ENCODE measurements at regions of chr1 and their contacts with region 1.

Region 1: DNA sequence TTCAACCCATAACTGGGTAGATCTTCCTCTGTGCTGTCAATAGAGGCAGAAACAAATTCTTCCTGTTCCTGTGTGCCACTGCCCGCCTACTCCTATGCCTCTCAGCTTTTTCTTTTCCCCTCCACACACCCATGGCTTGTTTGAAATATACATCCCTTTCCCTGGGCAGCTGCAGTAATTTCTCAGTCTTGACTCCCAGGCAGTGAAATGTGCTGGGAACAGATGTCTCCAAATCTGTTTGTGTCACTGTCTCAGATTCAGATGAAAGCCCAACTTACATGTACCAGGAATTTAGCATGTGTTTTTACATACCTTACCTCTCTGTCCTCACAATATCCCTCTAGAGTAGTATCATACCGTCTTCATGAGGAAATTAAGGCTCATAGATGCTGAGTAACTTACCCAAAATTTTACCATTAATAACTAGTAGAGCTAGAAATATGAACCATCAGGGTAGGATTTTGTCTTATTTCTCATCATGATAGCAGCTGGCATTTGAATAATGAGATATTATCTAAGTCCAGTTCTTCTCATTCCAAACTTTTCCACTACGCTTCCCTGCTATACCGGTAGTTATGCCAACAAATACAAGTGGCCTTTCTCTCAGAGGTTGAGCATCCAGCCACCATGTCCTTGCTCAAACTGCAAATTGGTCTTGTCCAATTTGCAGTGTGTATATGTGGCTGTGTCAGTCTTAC is 4.7 kb upstream of the VASH2 start:
- DNase-seq: no peak
- ATAC-seq: no peak

Region 2: GRCh38 chr1:211843018-211843417 is 1102.6 kb before region 1 on chr1:
- intact Hi-C with region 1: loop called (anchors 5 kb)
- DNase-seq: no peak
- ATAC-seq: no peak

Measured in sciatic nerve (tissue), 2 donors.